ENCODE measurements at regions of chr2 and their contacts with region 1.

Region 1: DNA sequence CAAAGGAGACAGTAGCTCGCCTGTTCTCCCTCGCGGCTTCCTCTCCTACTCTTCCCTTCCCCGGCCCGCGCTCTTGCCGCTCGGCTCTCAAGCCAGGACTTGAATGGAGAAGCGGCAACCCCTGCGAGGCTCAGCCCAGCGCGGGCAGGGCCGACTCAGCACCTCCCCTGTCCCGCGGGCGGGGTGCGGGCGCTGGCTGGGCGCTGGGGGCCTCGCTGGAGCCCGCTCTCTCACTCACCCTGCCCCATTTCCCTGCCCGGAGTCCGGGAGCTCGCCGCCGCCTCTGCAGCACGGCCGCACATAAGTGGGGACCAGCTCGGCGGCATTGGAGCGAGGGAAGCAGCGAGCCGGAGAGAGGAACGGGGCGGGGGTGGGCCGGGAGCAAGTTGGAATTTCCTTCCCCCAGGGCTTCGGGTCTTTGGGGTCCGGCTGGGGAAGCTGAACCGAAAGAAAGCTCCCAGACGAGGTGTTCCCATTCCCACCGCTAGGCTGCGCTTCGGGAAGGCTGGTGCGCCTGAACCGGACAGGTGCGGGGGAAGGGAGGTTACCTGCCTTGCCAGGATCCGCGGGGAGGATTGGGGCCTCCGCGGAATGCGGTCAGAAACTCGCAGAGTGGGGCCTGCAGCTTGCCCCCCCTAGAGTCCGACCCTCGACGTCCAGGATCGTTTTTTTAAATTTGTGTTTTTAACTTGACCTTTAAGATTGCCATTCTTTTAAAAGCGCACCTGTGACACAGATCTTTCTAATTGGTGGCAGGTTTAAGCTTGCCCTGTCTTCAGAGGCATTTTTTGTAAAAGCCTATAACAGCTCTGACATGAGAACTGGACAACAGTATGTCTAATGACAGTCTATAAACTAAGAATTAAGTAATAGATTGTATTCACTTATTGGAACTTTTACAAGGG is at the start of gene COBLL1:
- DNase-seq: peak; percentile 85
- ATAC-seq: peak; percentile 62
- H3K4me3 ChIP-seq: peak within 1 kb of the TSS; percentile 90
- H3K27ac ChIP-seq: peak within 1 kb of the TSS; percentile 12; the same call in 1 of the 2 replicates
- H3K4me1 ChIP-seq: peaks cover 28% of the 10 kb centered on the region
- H3K27me3 ChIP-seq: no peaks in the 10 kb centered on the region
- CTCF ChIP-seq: peak; percentile 74
- total RNA-seq, gene COBLL1: 3.6 and 4.3 TPM in 2 replicates

Region 2: DNA sequence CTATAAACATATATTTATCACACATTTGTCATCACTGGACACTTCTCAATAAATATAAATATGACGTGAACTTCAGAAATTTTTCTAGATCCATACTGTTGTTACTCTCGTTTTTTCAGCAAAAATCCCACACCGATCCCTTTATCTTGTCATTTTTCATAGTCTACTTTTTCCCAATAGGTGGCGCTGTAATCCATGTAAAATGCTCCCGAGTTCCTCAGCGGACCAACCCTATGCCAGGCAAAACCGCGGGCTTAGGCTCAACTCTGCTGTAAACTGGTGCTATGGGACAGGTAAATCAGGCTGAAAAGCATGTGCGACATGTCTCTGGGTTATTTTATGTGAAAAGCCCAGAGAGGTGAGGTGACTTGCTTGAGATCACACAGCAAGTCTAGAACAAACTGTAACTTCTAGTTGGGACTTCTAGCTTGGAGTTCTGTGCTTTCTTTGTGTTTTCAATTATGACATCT is 104.3 kb before region 1 on chr2:
- CTCF ChIA-PET with region 1: interaction called, 7 read pairs
- POLR2A ChIA-PET with region 1: no interaction called
- intact Hi-C with region 1: loop called (anchors 1 kb)
- DNase-seq: peak; percentile 84
- ATAC-seq: peak; percentile 86
- H3K4me3 ChIP-seq: no peak overlapping the region
- H3K27ac ChIP-seq: no peak overlapping the region
- H3K4me1 ChIP-seq: peaks cover 8% of the 10 kb centered on the region; the same call in 1 of the 2 replicates
- H3K27me3 ChIP-seq: no peaks in the 10 kb centered on the region
- CTCF ChIP-seq: peak; percentile 91

Region 3: GRCh38 chr2:164768662-164769061 is 73.3 kb before region 1 on chr2:
- CTCF ChIA-PET with region 1: no interaction called
- POLR2A ChIA-PET with region 1: no interaction called
- intact Hi-C with region 1: loop called (anchors 2 kb)
- DNase-seq: no peak
- ATAC-seq: no peak
- H3K4me3 ChIP-seq: no peak overlapping the region
- H3K27ac ChIP-seq: no peak overlapping the region
- H3K4me1 ChIP-seq: no peaks in the 10 kb centered on the region
- H3K27me3 ChIP-seq: no peaks in the 10 kb centered on the region
- CTCF ChIP-seq: no peak

Region 4: DNA sequence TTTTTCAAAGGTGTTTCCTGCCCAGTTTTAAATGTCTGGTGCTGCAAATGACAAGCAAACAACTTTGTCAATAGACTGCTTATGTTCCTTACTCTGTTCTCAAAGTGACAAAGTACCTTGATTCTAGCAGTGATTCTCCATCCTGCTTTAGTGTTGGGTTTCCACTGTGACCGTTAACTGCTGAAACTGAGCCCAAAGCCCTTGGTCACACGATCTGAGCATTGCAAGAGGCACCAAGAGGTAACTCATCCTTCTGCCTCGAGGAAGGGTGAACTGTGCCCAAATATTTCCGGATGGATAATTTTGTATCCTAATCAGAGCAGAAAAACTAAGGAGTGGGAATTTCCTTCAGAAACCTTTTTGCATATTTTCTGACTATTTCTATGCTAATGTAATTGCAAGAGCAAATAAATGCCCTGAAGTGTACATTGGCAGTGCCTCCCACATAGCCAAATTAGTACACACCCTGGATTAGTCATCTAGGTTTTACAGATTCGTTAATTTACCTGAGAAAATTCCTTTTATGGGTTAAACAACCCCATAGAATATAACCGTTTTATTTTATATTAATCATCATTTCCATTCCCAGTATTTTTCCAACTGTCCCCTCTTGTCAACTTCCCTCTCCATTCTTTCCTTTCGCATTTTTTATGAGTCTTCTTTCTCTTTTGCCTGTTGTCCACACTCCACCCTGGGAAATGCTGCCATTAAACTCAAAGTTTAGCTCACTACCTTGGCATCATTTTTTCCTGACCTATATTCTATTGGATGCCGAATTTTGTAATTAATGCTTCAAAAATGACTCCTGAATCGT is 31.3 kb after region 1 on chr2:
- CTCF ChIA-PET with region 1: no interaction called
- POLR2A ChIA-PET with region 1: no interaction called
- intact Hi-C with region 1: loop called (anchors 1 kb)
- DNase-seq: no peak
- ATAC-seq: peak; percentile 73
- H3K4me3 ChIP-seq: no peak overlapping the region
- H3K27ac ChIP-seq: no peak overlapping the region
- H3K4me1 ChIP-seq: 0 out of 2 replicates have a peak, but pooled peaks cover 8% of the 10 kb centered on the region
- H3K27me3 ChIP-seq: no peaks in the 10 kb centered on the region
- CTCF ChIP-seq: no peak

Region 5: DNA sequence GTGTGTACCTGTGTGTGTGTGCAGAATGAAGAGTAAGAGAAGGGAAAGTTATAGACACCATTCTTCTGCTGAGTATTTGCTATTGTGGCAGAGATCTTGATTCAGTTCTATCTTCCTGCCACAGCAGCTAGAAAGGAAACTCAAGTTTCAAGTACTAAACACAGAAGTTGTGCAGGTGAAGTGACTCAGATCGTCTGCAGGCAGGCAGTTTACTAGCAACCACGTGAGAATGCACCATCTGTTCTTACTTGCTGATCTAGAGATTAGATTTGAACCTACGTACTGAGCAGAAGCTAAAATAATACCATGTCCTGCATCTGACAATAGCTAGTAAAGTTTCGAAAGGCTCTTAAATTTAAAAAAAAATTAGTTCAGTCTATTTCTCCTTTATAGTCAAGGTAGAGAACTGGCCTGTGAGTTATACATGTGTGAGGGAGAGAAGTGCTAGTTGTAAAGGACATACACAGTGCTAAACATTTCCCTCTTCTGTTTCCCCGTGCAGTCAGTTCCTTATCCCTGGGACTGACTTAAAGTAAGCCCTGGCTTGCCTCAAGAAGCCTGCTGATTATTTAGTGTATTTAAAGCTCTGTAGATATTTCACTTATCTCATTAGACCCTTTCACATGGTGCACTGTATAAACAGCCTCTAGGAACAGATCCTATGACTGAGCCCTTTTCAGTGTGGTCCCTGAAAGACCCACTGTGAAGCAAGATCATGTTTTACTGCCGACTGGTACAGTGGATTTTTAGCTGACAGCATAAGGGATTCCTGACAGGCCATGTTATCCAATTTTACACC is 68.3 kb after region 1 on chr2:
- CTCF ChIA-PET with region 1: interaction called, 5 read pairs
- POLR2A ChIA-PET with region 1: no interaction called
- intact Hi-C with region 1: loop called (anchors 1 kb)
- DNase-seq: peak; percentile 64
- ATAC-seq: peak; percentile 93
- H3K4me3 ChIP-seq: no peak overlapping the region
- H3K27ac ChIP-seq: no peak overlapping the region
- H3K4me1 ChIP-seq: peaks cover 9% of the 10 kb centered on the region; the same call in 1 of the 2 replicates
- H3K27me3 ChIP-seq: no peaks in the 10 kb centered on the region
- CTCF ChIP-seq: no peak

Region 6: DNA sequence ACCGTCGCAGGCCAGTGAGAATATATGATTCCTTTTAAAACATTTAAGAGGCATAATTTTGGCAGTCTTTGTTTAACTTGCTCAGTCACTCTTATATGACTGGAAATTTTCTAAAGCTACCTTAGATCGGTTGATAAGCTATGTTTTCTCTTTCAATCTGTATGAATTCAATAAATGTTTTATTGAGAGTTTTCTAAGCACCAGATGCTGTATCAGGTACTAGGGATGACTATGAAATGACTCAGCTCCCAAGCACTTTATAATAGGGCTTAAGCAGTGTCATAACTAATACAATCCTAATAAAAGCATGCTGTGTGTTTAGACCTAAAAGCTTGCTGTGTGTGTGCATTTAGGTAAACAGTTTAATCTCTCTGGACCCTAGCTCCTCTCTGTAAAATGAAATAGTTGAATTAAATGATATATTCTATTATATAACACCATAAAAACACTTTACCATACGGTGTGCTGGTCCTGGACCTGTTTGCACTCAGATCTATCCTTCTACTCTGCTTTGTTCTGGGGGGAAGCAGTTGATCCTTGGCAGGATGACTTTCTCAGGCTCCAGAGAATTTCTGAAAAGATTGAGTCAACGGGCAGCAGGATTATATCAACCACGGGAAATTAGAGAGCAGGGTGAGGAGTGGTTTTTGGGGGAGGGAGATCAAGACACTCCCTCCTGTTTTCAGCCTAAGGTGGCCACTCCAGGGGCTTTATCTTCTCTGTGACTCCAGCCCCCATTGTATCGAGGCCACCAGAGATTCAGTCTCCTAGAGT is 139.4 kb after region 1 on chr2:
- CTCF ChIA-PET with region 1: interaction called, 4 read pairs
- POLR2A ChIA-PET with region 1: no interaction called
- intact Hi-C with region 1: loop called (anchors 2 kb)
- DNase-seq: peak; percentile 90
- ATAC-seq: peak; percentile 82
- H3K4me3 ChIP-seq: peak overlapping the region; percentile 36; the same call in 1 of the 2 replicates
- H3K27ac ChIP-seq: peak overlapping the region; percentile 94
- H3K4me1 ChIP-seq: peaks cover 42% of the 10 kb centered on the region
- H3K27me3 ChIP-seq: no peaks in the 10 kb centered on the region
- CTCF ChIP-seq: no peak